Panc1 (cell line): ENCODE measurements at regions of chrX and their contacts with region 1.

Region 1: GRCh38 chrX:54093159-54093558 is 48.9 kb upstream of the PHF8 start:
- DNase-seq: no peak
- ATAC-seq: no peak
- H3K4me3 ChIP-seq: no peak overlapping the region
- H3K27ac ChIP-seq: no peak overlapping the region
- H3K4me1 ChIP-seq: no peaks in the 10 kb centered on the region
- H3K27me3 ChIP-seq: no peaks in the 10 kb centered on the region
- CTCF ChIP-seq: no peak

Region 2: DNA sequence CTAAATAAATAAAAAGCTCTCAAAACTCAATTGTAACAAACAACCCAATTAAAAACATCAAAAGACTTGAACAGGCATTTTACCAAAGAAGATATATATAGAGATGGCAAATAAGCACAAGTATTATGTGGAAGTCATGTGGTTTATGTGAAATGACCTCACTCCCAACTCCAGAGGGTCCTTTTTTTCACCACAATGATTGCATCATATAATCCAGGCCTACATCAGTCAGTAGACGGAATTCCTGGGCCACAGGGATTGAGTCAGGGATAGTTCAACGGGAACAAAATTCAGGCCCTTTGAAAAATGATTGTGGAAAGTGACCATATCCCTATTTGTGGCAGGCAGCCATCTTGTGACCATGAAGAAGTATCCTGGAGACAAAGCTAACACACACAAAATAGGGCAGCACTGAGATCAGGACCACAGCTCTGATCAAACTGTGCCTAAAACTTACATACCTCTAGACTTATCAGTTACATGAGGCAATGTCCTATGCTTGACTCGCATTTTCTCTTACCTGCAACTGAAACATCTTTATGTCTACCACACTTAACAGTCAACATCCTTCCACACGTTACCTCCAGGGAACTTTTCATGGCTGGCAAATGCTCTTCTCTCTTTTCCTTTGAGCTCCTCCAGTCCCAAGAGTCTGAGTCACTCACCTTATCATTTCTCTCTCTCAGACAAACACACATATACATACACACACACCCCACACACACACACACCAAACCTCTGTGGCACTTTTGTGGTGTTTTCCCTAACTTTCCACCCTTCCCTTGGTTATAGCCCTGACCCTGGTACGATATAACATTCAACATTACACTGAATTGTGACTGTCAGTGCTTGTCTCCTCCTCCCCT is 162.4 kb before region 1 on chrX:
- CTCF ChIA-PET with region 1: no interaction called
- POLR2A ChIA-PET with region 1: interaction called, 11 read pairs
- in situ Hi-C with region 1: no loop called
- intact Hi-C with region 1: no loop called
- DNase-seq: no peak
- ATAC-seq: 0 out of 2 replicates have a peak, but pooled peaks have one; percentile 21
- H3K4me3 ChIP-seq: no peak overlapping the region
- H3K27ac ChIP-seq: no peak overlapping the region
- H3K4me1 ChIP-seq: no peaks in the 10 kb centered on the region
- H3K27me3 ChIP-seq: no peaks in the 10 kb centered on the region
- CTCF ChIP-seq: no peak

Region 3: GRCh38 chrX:54439967-54440871 is 347.1 kb after region 1 on chrX and contains the start of gene TSR2:
- CTCF ChIA-PET with region 1: no interaction called
- POLR2A ChIA-PET with region 1: no interaction called
- in situ Hi-C with region 1: no loop called
- intact Hi-C with region 1: no loop called
- DNase-seq: peak; percentile 69
- ATAC-seq: peak; percentile 99
- H3K4me3 ChIP-seq: peak within 1 kb of the TSS; percentile 93 to 95
- H3K27ac ChIP-seq: peak within 1 kb of the TSS; percentile 78
- H3K4me1 ChIP-seq: 0 out of 2 replicates have a peak, but pooled peaks cover 3% of the 10 kb centered on the region
- H3K27me3 ChIP-seq: no peaks in the 10 kb centered on the region
- CTCF ChIP-seq: no peak; the same call in 1 of the 2 replicates
- total RNA-seq, gene TSR2: 37.9 TPM